Mammary epithelial cell (primary cell): ENCODE measurements at regions of chr10 and their contacts with region 1.

Region 1: GRCh38 chr10:130820880-130821482 is 490.5 kb downstream of the TCERG1L start:
- DNase-seq: no peak
- H3K4me3 ChIP-seq: no peak overlapping the region
- H3K27ac ChIP-seq: no peak overlapping the region
- H3K4me1 ChIP-seq: no peaks in the 10 kb centered on the region
- H3K27me3 ChIP-seq: no peaks in the 10 kb centered on the region
- CTCF ChIP-seq: no peak

Region 2: GRCh38 chr10:130254662-130255061 is 566.3 kb before region 1 on chr10:
- CTCF ChIA-PET with region 1: no interaction called
- dilution Hi-C with region 1: no loop called
- in situ Hi-C with region 1: no loop called
- intact Hi-C with region 1: no loop called
- DNase-seq: no peak
- H3K4me3 ChIP-seq: no peak overlapping the region
- H3K27ac ChIP-seq: no peak overlapping the region
- H3K4me1 ChIP-seq: no peaks in the 10 kb centered on the region
- H3K27me3 ChIP-seq: no peaks in the 10 kb centered on the region
- CTCF ChIP-seq: no peak

Region 3: DNA sequence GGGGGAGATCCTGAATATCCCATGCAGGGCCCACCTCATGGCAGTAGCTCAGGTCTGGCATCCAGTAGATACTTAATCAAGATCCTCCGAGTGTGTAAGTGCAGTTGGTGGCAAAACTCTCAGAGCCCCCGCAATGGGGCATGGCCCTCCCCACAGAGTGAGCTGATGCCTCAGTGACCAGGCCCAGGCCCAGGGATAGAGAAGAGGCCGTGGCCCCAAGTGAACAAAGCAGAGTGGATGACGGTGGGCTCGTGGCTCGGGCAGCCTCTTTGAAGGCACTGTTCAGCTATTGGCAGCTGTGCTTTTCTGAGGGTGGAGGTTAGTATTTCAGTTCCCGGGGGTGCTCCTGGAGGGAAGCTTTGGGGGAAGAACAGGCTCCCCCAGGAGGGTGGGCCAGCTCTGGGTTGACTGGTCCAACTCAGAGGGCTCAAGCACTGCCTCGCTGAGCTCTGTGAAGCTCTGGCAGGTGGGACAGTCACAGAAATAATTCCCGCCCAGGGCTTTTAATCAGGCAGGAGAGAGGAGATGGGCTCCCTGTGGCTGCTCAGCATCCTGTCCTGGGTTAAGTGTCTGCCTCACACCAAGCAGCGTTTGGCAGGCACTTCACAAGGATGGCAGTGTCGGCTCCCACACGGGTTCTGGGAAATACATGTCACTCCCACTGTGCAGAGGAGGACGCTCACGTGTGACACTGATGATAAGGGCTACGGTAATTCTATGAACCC is 93.1 kb before region 1 on chr10:
- CTCF ChIA-PET with region 1: no interaction called
- dilution Hi-C with region 1: loop called (anchors 5 kb)
- in situ Hi-C with region 1: no loop called
- intact Hi-C with region 1: no loop called
- DNase-seq: no peak
- H3K4me3 ChIP-seq: no peak overlapping the region
- H3K27ac ChIP-seq: no peak overlapping the region
- H3K4me1 ChIP-seq: no peaks in the 10 kb centered on the region
- H3K27me3 ChIP-seq: no peaks in the 10 kb centered on the region
- CTCF ChIP-seq: no peak

Region 4: GRCh38 chr10:130914367-130914766 is 93.4 kb after region 1 on chr10:
- CTCF ChIA-PET with region 1: no interaction called
- dilution Hi-C with region 1: loop called (anchors 5 kb)
- in situ Hi-C with region 1: no loop called
- intact Hi-C with region 1: no loop called
- DNase-seq: no peak
- H3K4me3 ChIP-seq: no peak overlapping the region
- H3K27ac ChIP-seq: no peak overlapping the region
- H3K4me1 ChIP-seq: no peaks in the 10 kb centered on the region
- H3K27me3 ChIP-seq: no peaks in the 10 kb centered on the region
- CTCF ChIP-seq: no peak